ENCODE measurements at regions of chr14 and their contacts with region 1.

Region 1: GRCh38 chr14:35121887-35122695 is at the starts of genes PPP2R3C and PRORP:
- DNase-seq: peak; percentile 98
- ATAC-seq: peak; percentile 94
- H3K4me3 ChIP-seq: peak within 1 kb of the TSS; percentile 82 to 97 (median 86)
- H3K27ac ChIP-seq: peak within 1 kb of the TSS; percentile 91
- H3K4me1 ChIP-seq: peaks cover 67% of the 10 kb centered on the region
- H3K27me3 ChIP-seq: peaks cover 0 to 5% of the 10 kb centered on the region in 2 experiments; a peak in 2 of 5 replicates
- CTCF ChIP-seq: peak; percentile 37
- EP300 ChIP-seq: peak; percentile 47 to 82
- POLR2A ChIP-seq: peak; percentile 90 to 96
- RAD21 ChIP-seq: no peak
- total RNA-seq, gene PPP2R3C: 102 and 140 TPM in 2 replicates
- total RNA-seq, gene PRORP: 88.7 and 131 TPM in 2 replicates

Region 2: DNA sequence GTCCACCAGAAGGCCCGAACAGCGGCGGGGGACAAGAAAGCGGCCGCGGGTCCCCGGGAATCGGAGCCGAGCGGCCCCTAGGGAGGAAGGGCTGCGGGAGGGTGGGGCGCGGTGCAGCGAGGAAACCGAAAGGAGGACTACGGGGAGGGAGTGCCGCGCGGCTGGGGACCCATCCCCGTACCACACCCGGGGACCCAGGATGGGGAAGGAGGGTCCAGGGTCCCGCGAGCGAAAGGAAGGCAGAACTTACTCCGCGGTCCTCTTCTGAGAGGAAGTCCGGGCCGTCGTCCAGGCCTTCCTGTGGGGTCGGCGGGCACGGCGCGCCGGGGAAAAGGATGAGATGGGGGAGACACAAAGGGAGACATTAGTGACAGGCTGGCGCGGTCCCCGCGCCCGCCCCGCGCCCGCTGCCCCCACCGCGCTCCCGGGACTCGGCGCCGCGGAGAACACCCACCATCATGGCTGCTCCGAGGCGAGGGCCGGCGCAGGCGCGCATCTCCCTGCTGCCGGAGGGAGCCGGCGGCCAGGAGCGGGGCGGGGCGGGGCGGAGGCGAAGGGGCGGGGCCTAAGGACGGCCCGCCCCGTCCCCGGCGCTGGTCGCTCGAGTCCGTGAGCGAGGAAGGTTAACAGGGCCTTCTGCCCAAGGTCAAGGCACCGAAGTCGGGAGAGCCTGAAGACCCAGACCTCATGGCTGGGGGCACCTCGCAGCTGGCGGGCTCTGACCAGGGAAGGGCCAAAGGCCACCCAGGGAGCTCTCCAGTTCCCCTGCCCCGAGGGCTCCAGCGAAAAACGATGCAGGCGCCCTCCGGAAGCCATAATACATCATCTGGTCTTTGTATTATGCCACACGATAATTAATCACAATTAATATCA is 492.2 kb before region 1 on chr14 and contains the start of gene SNX6:
- CTCF ChIA-PET with region 1: no interaction called
- POLR2A ChIA-PET with region 1: no interaction called
- in situ Hi-C with region 1: no loop called
- intact Hi-C with region 1: loop called (anchors 2 kb)
- DNase-seq: peak; percentile 78
- ATAC-seq: peak; percentile 97
- H3K4me3 ChIP-seq: peak within 1 kb of the TSS; percentile 95 to 100 (median 99)
- H3K27ac ChIP-seq: peak within 1 kb of the TSS; percentile 81
- H3K4me1 ChIP-seq: peaks cover 39% of the 10 kb centered on the region
- H3K27me3 ChIP-seq: peaks cover 0 to 3% of the 10 kb centered on the region in 2 experiments; a peak in 1 of 5 replicates
- CTCF ChIP-seq: peak; percentile 38; the same call in 1 of the 2 replicates
- EP300 ChIP-seq: no peak; a peak in 1 of 4 replicates
- POLR2A ChIP-seq: peak; percentile 85 to 97
- RAD21 ChIP-seq: peak; percentile 24
- total RNA-seq, gene SNX6: 169 and 318 TPM in 2 replicates

Region 3: DNA sequence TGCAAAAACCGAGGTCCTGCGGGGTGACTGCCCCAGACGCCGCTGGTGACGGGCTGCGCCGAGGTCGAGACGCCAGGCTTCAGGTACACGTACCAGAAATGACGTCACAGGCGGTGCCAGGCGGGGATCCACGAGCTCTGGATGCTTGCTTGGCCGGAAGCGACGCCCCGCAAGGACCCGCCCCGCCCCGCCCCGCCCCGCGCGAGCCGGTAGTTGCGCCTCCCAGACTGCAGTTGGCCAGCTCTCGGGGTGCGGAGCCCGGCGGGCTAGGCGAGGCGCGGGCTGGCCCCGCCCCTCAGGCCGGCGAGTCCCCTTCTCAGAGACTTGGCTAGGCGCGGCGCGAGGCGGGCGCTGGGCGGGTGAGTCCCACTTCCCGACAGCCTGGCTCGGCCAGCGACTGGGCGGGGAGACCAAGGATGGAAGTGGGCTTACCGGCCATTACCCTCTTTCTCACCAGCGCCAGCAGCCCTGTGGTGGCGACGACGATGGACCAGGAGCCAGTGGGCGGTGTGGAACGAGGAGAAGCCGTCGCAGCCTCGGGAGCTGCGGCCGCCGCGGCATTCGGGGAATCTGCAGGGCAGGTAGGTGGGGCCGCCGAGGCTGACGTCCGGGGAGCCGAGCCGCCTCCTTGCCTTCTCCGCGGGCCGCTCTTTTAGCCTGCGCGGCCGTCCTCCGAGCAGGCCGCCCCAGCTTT is 75.9 kb before region 1 on chr14 and contains the start of gene FAM177A1:
- CTCF ChIA-PET with region 1: no interaction called
- POLR2A ChIA-PET with region 1: interaction called, 42 read pairs
- in situ Hi-C with region 1: no loop called
- intact Hi-C with region 1: loop called (anchors 1 kb)
- DNase-seq: peak; percentile 99
- ATAC-seq: peak; percentile 97
- H3K4me3 ChIP-seq: peak within 1 kb of the TSS; percentile 81 to 96 (median 90)
- H3K27ac ChIP-seq: peak within 1 kb of the TSS; percentile 82
- H3K4me1 ChIP-seq: peaks cover 52% of the 10 kb centered on the region
- H3K27me3 ChIP-seq: no peaks in the 10 kb centered on the region; a peak in 1 of 5 replicates
- CTCF ChIP-seq: peak; percentile 48
- EP300 ChIP-seq: peak in 1 of 2 experiments; percentile 44; a peak in 2 of 4 replicates
- POLR2A ChIP-seq: peak; percentile 93 to 96
- RAD21 ChIP-seq: peak; percentile 72
- total RNA-seq, gene FAM177A1: 116 and 119 TPM in 2 replicates

Region 4: GRCh38 chr14:35331605-35332516 is 209.8 kb after region 1 on chr14:
- CTCF ChIA-PET with region 1: no interaction called
- POLR2A ChIA-PET with region 1: interaction called, 11 read pairs
- in situ Hi-C with region 1: no loop called
- intact Hi-C with region 1: no loop called
- DNase-seq: peak; percentile 75
- ATAC-seq: peak; percentile 31
- H3K4me3 ChIP-seq: peak overlapping the region; percentile 32 to 62 (median 41)
- H3K27ac ChIP-seq: no peak overlapping the region
- H3K4me1 ChIP-seq: peaks cover 67% of the 10 kb centered on the region
- H3K27me3 ChIP-seq: no peaks in the 10 kb centered on the region
- CTCF ChIP-seq: peak; percentile 11; the same call in 1 of the 2 replicates
- EP300 ChIP-seq: no peak
- POLR2A ChIP-seq: no peak
- RAD21 ChIP-seq: peak; percentile 39; the same call in 1 of the 2 replicates

Region 5: DNA sequence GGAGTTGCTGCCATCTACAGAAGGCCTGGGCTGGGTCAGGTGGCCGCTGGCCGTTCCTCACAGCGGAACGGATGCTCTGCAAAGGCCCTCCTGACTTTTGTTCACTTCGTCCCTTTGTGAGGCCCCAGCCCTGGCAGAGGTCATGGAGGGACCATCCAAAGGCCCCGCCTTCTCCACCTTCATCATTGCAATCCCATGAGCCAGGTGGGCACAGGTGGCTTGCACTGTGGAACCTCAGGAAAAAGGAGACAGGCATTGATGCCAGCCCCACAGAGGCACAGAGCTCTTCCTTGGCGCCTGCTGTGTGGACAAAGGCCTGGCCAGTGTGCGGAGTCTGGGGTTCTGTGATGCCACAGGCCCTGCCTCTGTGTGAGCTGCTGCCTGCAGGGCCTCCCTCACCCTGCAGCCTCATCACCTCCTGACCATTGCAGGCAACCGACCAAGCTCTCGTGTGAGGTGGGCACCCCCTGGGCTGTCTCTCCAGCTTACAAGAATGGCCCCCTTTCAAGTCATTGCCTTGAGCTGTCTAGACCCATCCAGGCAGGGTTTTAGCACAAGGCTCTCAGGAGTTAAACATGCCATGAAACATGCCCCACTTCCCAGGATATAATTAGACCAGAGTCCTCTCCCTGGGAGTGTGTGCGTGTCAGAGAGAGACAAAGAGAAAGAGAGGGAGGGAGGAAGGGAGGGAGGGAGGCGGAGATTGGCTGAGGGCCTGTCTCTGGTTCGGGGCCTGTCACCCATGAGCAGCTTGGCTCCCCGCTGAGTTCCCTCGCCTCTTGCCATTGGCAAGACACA is 263.1 kb after region 1 on chr14:
- CTCF ChIA-PET with region 1: no interaction called
- POLR2A ChIA-PET with region 1: no interaction called
- in situ Hi-C with region 1: no loop called
- intact Hi-C with region 1: no loop called
- DNase-seq: peak; percentile 85
- ATAC-seq: peak; percentile 83
- H3K4me3 ChIP-seq: peak overlapping the region; percentile 41 to 73 (median 44)
- H3K27ac ChIP-seq: peak overlapping the region; percentile 29
- H3K4me1 ChIP-seq: peaks cover 52% of the 10 kb centered on the region
- H3K27me3 ChIP-seq: no peaks in the 10 kb centered on the region
- CTCF ChIP-seq: peak; percentile 10; the same call in 1 of the 2 replicates
- EP300 ChIP-seq: peak; percentile 17 to 30; a peak in 2 of 4 replicates
- POLR2A ChIP-seq: peak in 1 of 2 experiments; percentile 59; a peak in 2 of 4 replicates
- RAD21 ChIP-seq: no peak

Region 6: DNA sequence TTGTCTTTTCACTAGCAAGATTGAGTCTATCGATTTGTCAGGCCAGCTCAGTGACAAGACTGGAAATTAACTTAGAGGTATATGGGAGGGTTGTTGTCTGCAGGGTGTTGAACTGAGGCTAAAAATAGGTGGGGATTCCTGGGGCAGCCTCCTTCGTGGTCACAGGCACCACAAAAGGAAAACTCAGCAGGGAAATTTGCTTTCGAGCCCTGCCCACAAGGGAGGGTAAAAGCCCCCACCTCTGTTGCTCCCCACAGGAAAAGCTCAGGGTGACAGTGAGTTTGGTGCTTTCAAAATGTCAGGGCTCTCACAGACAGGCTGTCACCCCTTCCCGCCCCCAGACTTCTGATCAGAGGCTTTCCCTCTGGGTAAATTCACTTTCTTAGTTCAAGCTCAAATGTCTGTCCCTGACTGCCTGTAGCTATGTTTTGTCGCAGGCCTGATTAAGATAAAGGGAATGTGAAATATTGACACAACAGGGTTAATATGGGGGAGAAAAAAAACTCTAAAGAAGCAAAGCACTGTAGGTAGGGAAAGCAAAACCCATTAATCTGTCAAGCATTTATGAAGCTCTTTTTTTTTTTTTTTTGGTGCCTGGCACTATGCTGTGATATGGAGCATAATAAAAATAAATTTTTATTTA is 294.1 kb after region 1 on chr14:
- CTCF ChIA-PET with region 1: no interaction called
- POLR2A ChIA-PET with region 1: interaction called, 11 read pairs
- in situ Hi-C with region 1: no loop called
- intact Hi-C with region 1: no loop called
- DNase-seq: no peak
- ATAC-seq: no peak
- H3K4me3 ChIP-seq: peak overlapping the region in 1 of 3 experiments; percentile 14; a peak in 1 of 6 replicates
- H3K27ac ChIP-seq: no peak overlapping the region
- H3K4me1 ChIP-seq: peaks cover 73% of the 10 kb centered on the region
- H3K27me3 ChIP-seq: peaks cover 4 to 12% of the 10 kb centered on the region in 2 experiments; a peak in 3 of 5 replicates
- CTCF ChIP-seq: no peak
- EP300 ChIP-seq: no peak
- POLR2A ChIP-seq: no peak
- RAD21 ChIP-seq: no peak

Measured in HepG2 (cell line).